ENCODE measurements at regions of chr3 and their contacts with region 1.

Region 1: GRCh38 chr3:28935146-28935545 is 345.7 kb upstream of the RBMS3 start:
- DNase-seq: no peak
- H3K4me3 Mint-ChIP-seq: no peak overlapping the region
- H3K27ac Mint-ChIP-seq: no peak overlapping the region
- H3K4me1 Mint-ChIP-seq: peaks cover 11% of the 10 kb centered on the region
- H3K27me3 Mint-ChIP-seq: no peaks in the 10 kb centered on the region

Region 2: DNA sequence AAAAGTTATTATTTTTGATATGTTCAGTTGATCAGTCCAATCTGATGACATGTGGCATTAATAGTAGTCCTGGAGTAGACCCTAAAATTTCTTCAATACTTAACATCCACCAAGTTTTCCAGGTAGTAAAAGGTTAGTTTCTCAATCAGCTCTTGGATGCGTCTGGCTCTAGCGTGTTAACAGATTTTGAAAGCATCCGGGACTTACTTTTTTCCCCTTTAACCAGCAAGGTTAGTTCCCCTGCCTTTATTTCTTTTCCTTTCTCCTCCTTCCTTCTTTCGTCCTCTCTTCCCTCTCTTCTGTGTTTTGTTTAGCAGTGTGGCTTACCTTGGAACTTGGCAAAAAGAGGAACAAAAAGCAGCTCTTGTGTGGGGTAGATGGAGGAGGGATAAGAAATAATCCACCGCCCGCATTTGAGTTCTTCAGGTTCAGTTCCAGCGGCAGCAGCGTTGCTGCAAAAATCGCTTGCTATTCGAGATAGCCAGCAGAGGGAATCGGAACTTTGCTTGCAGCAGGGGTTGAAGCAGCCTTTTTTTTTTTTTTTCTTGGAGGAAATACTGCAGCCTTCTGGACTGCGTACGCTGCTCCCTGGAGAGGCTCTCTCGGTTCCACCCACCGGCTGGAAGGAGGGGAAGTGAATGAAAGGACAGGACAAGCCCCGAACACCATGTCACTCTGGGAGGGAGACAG is 345.4 kb after region 1 on chr3 and contains the start of gene RBMS3:
- CTCF ChIA-PET with region 1: no interaction called
- POLR2A ChIA-PET with region 1: no interaction called
- intact Hi-C with region 1: loop called (anchors 5 kb)
- DNase-seq: peak; percentile 17
- H3K4me3 Mint-ChIP-seq: peak within 1 kb of the TSS; percentile 64
- H3K27ac Mint-ChIP-seq: peak within 1 kb of the TSS; percentile 57
- H3K4me1 Mint-ChIP-seq: peaks cover 24% of the 10 kb centered on the region
- H3K27me3 Mint-ChIP-seq: peaks cover 13% of the 10 kb centered on the region
- total RNA-seq, gene RBMS3: 1.6 TPM

Measured in activated CD4-positive, alpha-beta memory T cell treated with anti-CD3 and anti-CD28 coated beads for 36 hours (primary cell).